GM18951 (cell line): ENCODE measurements at regions of chr17 and their contacts with region 1.

Region 1: GRCh38 chr17:42438600-42439567 is 15.8 kb upstream of the CAVIN1 start:
- POLR2A ChIP-seq: no peak

Region 2: GRCh38 chr17:42527273-42527703 is 88.4 kb after region 1 on chr17:
- in situ Hi-C with region 1: loop called (anchors 5 kb)
- POLR2A ChIP-seq: no peak